ENCODE measurements at regions of chr15 and their contacts with region 1.

Region 1: DNA sequence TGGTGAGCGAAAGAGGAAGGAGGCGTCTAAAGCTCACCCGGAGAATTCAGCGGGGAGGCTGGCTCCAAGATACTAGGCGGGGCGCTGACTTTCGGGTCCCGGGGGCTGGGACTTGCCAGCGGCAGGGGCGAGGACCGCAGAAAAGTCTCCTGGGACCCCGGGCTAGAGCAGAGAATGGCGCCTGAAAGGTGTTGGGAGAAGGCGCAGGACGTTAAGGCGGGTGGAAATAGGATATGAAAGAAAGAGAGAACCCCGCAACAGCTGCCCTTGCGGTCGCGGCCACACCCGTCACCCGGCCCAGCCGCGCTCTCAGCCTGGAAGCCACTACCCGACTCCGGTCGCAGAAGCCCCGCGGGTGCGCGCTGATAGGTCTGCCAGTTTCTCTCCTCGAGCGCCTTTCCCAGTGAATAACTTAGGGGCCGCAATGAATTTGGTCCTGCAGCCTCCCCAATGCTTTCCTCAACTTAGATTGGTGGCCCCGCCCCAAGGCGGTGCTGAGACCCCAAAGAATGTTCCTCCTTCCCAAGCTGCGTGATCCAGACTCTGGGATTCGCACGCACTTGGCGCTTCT is 602 bp downstream of the LTK start:
- DNase-seq: peak; percentile 73
- H3K4me3 ChIP-seq: peak overlapping the region; percentile 59
- H3K27ac ChIP-seq: no peak overlapping the region
- H3K4me1 ChIP-seq: peaks cover 20% of the 10 kb centered on the region
- H3K27me3 ChIP-seq: peaks cover 11% of the 10 kb centered on the region
- CTCF ChIP-seq: no peak

Region 2: GRCh38 chr15:40454904-40455391 is 1058.1 kb before region 1 on chr15:
- CTCF ChIA-PET with region 1: no interaction called
- POLR2A ChIA-PET with region 1: no interaction called
- intact Hi-C with region 1: no loop called
- DNase-seq: no peak
- H3K4me3 ChIP-seq: no peak overlapping the region
- H3K27ac ChIP-seq: peak overlapping the region; percentile 37
- H3K4me1 ChIP-seq: peaks cover 12% of the 10 kb centered on the region
- H3K27me3 ChIP-seq: no peaks in the 10 kb centered on the region
- CTCF ChIP-seq: no peak

Region 3: DNA sequence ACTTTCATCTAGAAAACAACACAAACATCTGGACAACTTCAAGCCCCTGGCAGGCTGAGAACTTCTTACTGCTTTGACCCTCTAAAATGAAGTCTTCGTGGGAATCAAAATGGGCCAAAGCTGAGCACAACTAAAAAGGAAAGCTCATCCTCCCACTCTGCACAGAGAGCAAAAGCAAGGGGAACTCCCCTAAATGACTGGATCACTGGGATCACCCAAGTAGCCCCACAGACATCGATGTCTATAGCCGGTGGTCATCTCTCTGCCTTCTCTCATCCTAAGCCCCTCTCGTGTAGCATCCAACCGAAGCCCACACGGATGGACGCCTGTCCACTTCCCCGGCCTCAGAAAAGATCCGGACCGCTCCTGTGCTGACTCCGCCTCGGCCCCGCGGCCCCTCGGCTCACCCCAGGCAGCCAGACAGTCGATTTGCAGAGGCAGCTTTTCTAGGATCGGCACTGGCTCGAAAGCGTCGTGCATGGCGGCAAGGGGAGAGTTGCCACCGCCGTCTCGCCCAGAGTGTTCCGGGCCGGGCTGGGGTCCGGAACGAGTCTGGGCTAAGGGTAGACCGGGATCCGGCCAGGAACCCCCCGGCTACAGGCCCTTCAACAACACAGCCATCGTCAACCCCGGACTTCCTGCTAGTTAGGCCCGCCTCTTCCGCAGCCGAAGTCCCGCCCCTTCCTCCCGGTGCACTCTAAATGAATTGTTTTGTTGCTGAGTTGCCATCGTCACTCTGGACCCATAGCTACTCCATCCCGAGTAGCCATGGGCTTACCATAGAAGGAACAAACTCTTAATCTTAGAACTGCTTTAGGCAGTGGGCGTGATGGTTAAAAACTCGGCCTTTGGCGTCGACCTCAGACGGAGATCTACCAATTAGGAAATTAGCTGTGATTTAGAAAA is 694.9 kb after region 1 on chr15 and contains the start of gene VPS39:
- CTCF ChIA-PET with region 1: interaction called, 19 read pairs
- POLR2A ChIA-PET with region 1: no interaction called
- intact Hi-C with region 1: no loop called
- DNase-seq: peak; percentile 89
- H3K4me3 ChIP-seq: peak within 1 kb of the TSS; percentile 97
- H3K27ac ChIP-seq: peak within 1 kb of the TSS; percentile 78
- H3K4me1 ChIP-seq: peaks cover 10% of the 10 kb centered on the region
- H3K27me3 ChIP-seq: no peaks in the 10 kb centered on the region
- CTCF ChIP-seq: no peak
- total RNA-seq, gene VPS39: 46.9 and 47.9 TPM in 2 replicates

Measured in A673 (cell line).